GM10248 (cell line): ENCODE measurements at regions of chr20 and their contacts with region 1.

Region 1: GRCh38 chr20:49245921-49246740 is 26.9 kb downstream of the DDX27 start:
- DNase-seq: peak; percentile 60
- CTCF ChIP-seq: peak; percentile 66

Region 2: GRCh38 chr20:48490961-48491831 is 754.9 kb before region 1 on chr20:
- CTCF ChIA-PET with region 1: no interaction called
- POLR2A ChIA-PET with region 1: no interaction called
- DNase-seq: no peak
- CTCF ChIP-seq: no peak

Region 3: GRCh38 chr20:49230561-49231193 is 15.5 kb before region 1 on chr20:
- CTCF ChIA-PET with region 1: interaction called, 11 read pairs
- POLR2A ChIA-PET with region 1: no interaction called
- DNase-seq: no peak
- CTCF ChIP-seq: no peak

Region 4: DNA sequence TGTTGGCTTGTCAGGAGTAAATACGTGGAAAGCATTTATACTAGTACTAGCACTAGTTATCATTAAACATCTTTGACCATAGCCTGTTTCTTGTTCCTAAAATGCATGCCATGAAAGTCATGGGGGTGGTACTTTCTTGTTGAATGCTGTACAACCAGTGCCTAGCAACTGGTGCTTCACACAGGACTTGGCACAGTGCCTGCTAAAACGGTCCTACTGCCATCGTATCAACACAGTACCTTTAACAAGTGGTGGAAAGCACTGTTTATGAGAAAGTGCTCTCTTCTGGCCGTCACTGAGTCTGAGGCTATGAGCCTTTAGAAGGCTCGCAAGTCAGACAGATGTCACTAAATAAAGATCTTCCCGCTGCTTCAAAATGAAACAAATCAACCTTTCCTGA is 10.1 kb after region 1 on chr20:
- CTCF ChIA-PET with region 1: interaction called, 28 read pairs
- POLR2A ChIA-PET with region 1: interaction called, 4 read pairs
- DNase-seq: no peak
- CTCF ChIP-seq: no peak

Region 5: GRCh38 chr20:49268600-49269365 is 22.7 kb after region 1 on chr20:
- CTCF ChIA-PET with region 1: interaction called, 17 read pairs
- POLR2A ChIA-PET with region 1: no interaction called
- DNase-seq: no peak
- CTCF ChIP-seq: no peak

Region 6: GRCh38 chr20:49323622-49324238 is 77.6 kb after region 1 on chr20:
- CTCF ChIA-PET with region 1: interaction called, 10 read pairs
- POLR2A ChIA-PET with region 1: no interaction called
- DNase-seq: peak; percentile 36
- CTCF ChIP-seq: peak; percentile 53